Heart right ventricle (tissue), 16 donors: ENCODE measurements at regions of chr7 and their contacts with region 1.

Region 1: GRCh38 chr7:32490127-32490822 is at the start of gene LSM5:
- DNase-seq: peak; percentile 88 to 93
- ATAC-seq: peak; percentile 85 to 95 (median 91)
- H3K4me3 ChIP-seq: peak within 1 kb of the TSS; percentile 46 to 81 (median 70)
- H3K27ac ChIP-seq: peak within 1 kb of the TSS; percentile 43 to 95 (median 86)
- H3K4me1 ChIP-seq: peaks cover 0 to 30% (median 19%) of the 10 kb centered on the region in 9 donors
- H3K27me3 ChIP-seq: no peaks in the 10 kb centered on the region
- CTCF ChIP-seq: no peak
- total RNA-seq, gene LSM5: 36.1 to 49.8 (median 40.9) TPM

Region 2: DNA sequence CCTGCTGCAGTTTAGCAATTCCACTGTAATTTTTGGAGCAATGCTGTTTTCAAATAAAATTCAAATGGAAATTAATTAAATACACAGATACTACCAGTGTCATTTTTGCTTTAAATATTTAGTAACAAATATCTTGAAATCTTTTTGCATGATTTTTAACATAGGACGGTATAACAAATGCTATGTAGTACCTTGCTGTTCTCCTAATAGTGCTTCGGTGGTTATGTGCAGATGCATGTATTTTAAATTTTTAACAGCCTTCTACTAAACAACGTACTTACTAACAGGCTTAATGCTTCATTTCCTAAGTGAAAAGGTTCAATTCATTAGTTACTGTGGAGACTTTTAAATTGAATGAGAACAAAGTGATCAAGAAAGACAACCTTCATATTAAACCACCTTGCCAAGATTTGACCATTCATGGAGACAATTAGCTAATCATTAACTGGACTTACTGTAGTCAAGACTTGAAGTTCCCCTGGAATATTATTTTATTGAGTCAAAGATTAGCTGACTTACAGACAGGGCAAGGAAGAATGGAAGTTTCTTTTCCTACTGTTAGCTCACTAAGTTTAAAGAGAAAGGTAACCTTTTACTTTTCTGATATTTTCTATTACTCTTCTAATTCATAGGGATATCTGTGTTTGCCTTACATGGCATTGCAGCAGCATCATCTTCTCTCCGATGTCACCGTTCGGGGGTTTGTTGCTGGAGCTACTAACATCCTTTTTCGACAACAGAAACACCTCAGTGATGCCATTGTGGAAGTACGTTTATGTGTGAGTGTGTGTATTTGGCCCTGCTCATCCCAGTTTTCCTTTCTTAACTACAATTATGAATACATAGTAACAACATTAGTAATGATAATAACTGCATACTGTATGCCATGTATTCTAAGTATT is 79.4 kb after region 1 on chr7:
- intact Hi-C with region 1: no loop called
- DNase-seq: no peak
- ATAC-seq: no peak
- H3K4me3 ChIP-seq: no peak overlapping the region
- H3K27ac ChIP-seq: no peak overlapping the region
- H3K4me1 ChIP-seq: peaks cover 0 to 9% (median 4%) of the 10 kb centered on the region in 9 donors
- H3K27me3 ChIP-seq: no peaks in the 10 kb centered on the region
- CTCF ChIP-seq: no peak

Region 3: GRCh38 chr7:32588657-32589056 is 98.4 kb after region 1 on chr7:
- intact Hi-C with region 1: loop called in 6 of 10 experiments (anchors 5 to 10 kb)
- DNase-seq: no peak
- ATAC-seq: peak in 6 of 8 donors; percentile 30 to 58 (median 36)
- H3K4me3 ChIP-seq: no peak overlapping the region
- H3K27ac ChIP-seq: peak overlapping the region in 8 of 10 donors; percentile 65 to 93 (median 86)
- H3K4me1 ChIP-seq: peaks cover 3 to 50% (median 40%) of the 10 kb centered on the region in 9 donors
- H3K27me3 ChIP-seq: no peaks in the 10 kb centered on the region
- CTCF ChIP-seq: no peak